Upper lobe of right lung (tissue), 1 donor: ENCODE measurements at regions of chr15 and their contacts with region 1.

Region 1: GRCh38 chr15:69058830-69059556 is 44.5 kb downstream of the NOX5 start:
- DNase-seq: peak; percentile 90
- ATAC-seq: peak; percentile 89
- H3K4me3 ChIP-seq: no peak overlapping the region
- H3K27ac ChIP-seq: no peak overlapping the region
- H3K4me1 ChIP-seq: peaks cover 12% of the 10 kb centered on the region
- H3K27me3 ChIP-seq: no peaks in the 10 kb centered on the region
- CTCF ChIP-seq: peak; percentile 88

Region 2: DNA sequence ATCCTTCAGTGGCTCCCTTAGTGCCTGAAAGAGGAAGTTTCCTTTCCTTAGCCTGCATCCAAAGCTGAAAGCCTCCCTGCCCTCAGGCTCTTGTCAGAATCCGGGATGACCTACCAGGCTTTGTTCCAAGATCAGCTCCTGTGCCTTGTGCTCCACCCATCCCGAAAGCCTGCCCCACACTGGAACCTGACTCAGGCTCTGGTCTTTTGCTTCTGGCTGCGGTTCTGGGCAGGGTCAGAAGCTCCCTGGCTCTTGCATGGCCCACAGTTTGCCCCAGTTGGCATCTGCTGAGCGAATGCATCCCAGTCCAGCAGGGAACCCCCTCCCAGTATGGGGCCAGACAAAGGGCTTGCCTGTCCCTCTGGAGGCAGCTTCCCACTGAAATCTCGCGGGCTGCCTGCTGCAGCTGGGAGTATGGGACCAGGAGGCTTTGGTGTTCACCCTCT is 329.3 kb after region 1 on chr15:
- intact Hi-C with region 1: loop called (anchors 5 kb)
- DNase-seq: peak; percentile 53
- ATAC-seq: no peak
- H3K4me3 ChIP-seq: no peak overlapping the region
- H3K27ac ChIP-seq: no peak overlapping the region
- H3K4me1 ChIP-seq: peaks cover 2% of the 10 kb centered on the region
- H3K27me3 ChIP-seq: no peaks in the 10 kb centered on the region
- CTCF ChIP-seq: no peak

Region 3: DNA sequence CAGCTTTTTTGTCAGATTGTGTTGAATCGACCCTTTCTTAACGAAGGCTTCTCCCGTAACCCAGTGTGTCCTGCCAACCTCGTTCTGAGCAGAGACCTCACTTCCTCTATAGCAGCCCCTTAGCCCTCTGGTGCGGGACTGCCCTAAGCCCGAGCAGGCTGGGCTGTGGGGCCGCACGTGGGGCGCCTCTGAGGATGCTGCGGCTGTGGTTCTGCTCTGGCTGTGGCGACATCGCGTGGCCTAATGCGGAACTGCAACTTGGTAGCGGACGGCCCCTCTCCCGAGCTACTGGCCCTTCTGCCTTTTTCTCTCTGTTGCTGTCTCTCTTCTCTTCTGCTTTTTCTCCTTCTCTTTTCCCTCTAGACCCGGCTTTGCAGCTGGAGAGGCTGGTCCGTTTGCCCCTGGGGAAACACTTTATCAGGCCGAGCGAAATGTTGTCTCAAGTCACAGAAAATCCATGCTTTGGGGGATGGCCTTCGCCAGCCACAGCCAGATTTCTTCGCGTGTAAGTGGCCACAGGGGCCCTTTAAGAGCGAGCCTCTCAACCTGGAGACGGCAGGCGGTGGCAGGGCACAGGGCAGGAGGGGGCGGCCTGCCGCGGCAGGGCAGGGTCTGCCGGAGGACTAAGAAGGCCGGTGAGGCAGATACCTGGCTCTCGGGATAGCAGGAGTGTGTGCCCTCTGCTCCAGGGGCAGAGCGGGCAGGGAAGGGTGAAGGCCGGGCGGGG is 335.7 kb after region 1 on chr15:
- intact Hi-C with region 1: loop called (anchors 5 kb)
- DNase-seq: peak; percentile 90
- ATAC-seq: peak; percentile 94
- H3K4me3 ChIP-seq: no peak overlapping the region
- H3K27ac ChIP-seq: no peak overlapping the region
- H3K4me1 ChIP-seq: peaks cover 10% of the 10 kb centered on the region
- H3K27me3 ChIP-seq: no peaks in the 10 kb centered on the region
- CTCF ChIP-seq: peak; percentile 97